ENCODE measurements at regions of chr6 and their contacts with region 1.

Region 1: DNA sequence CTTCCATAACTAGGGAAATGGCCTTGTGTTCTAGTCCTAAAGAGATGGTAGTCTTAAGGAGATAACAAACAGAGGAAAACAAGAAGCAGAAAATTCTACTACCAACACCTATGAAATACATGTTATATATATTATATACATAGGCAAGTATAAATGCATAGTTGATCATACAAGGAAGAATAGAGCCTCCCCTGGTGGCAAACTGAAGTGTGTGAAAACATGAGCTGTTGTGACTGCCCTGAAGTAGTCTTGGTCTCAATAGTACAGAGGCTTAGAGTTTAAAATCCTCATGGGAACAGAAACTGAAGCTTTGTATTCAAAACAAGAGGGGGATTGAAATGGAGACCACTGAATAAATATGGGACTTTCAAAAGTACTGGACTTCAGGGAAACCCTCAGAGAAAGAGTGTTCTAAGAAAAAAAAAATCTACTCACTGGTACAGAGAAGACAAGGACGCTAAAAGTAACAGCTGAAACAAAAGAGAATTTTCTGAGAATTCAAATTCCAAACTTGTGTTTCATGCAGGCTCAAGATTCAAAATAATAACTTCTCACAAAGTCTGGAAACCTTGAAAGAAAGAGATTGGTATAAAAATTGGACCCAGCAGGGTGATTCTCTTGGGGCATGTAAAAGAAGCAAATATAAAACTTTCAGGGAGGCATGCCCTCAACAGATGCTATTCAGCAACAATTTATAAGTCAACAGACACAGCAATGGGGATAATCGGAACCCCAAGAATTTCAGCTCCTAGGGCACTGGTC is 59.7 kb upstream of the SAMD3 start:
- DNase-seq: peak in 6 of 9 experiments; percentile 14 to 67 (median 32)
- ATAC-seq: peak; percentile 73
- H3K4me3 ChIP-seq: no peak overlapping the region
- H3K4me3 Mint-ChIP-seq: no peak overlapping the region
- H3K27ac ChIP-seq: no peak overlapping the region
- H3K27ac Mint-ChIP-seq: no peak overlapping the region
- H3K4me1 ChIP-seq: no peaks in the 10 kb centered on the region
- H3K4me1 Mint-ChIP-seq: peaks cover 10% of the 10 kb centered on the region
- H3K27me3 ChIP-seq: no peaks in the 10 kb centered on the region
- H3K27me3 Mint-ChIP-seq: no peaks in the 10 kb centered on the region
- CTCF ChIP-seq: peak; percentile 70

Region 2: DNA sequence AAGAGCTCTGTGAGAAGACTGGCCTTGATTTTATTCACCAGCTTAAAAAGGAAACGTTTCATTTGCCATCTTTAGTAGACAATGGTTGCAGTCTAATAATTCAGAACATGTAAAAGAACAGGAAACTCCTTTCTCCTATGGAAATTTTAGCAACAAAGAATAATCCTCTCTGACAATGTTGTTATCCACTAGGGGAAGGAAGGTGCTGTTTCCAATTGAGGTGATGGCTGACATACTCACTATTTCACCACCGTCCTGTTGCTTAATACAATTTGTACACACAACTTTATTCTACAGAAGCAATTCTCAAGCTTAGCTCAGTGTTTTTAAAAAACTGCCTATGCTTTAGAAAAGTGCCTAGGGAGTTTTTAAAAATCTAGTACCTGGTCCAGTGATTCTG is 765.1 kb before region 1 on chr6:
- CTCF ChIA-PET with region 1: no interaction called
- POLR2A ChIA-PET with region 1: no interaction called
- intact Hi-C with region 1: no loop called
- DNase-seq: no peak
- ATAC-seq: no peak
- H3K4me3 ChIP-seq: no peak overlapping the region
- H3K4me3 Mint-ChIP-seq: no peak overlapping the region
- H3K27ac ChIP-seq: no peak overlapping the region
- H3K27ac Mint-ChIP-seq: no peak overlapping the region
- H3K4me1 ChIP-seq: no peaks in the 10 kb centered on the region
- H3K4me1 Mint-ChIP-seq: no peaks in the 10 kb centered on the region
- H3K27me3 ChIP-seq: no peaks in the 10 kb centered on the region
- H3K27me3 Mint-ChIP-seq: no peaks in the 10 kb centered on the region
- CTCF ChIP-seq: no peak

Region 3: DNA sequence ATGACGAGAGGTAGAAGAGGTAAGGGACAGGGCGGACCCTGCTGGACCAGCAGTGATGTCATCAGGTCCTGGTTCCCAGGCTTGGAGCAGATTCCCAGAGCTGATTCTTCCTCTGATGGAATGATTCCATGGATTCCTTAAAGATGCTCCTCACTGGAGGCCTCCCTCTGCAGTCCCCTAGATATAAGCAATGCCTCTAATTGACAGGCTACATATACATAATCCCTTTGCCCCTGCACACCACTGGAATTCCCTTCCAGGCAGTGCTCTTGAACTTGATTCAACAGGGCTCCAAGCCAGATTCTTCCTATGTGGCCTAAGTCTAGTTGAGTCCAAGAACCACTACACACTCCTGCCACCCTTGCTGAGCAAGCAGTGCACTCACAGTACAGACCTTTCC is 316.3 kb before region 1 on chr6:
- CTCF ChIA-PET with region 1: no interaction called
- POLR2A ChIA-PET with region 1: no interaction called
- intact Hi-C with region 1: no loop called
- DNase-seq: no peak
- ATAC-seq: no peak
- H3K4me3 ChIP-seq: no peak overlapping the region
- H3K4me3 Mint-ChIP-seq: no peak overlapping the region
- H3K27ac ChIP-seq: no peak overlapping the region
- H3K27ac Mint-ChIP-seq: no peak overlapping the region
- H3K4me1 ChIP-seq: no peaks in the 10 kb centered on the region
- H3K4me1 Mint-ChIP-seq: no peaks in the 10 kb centered on the region
- H3K27me3 ChIP-seq: peaks cover 0 to 7% of the 10 kb centered on the region in 2 experiments
- H3K27me3 Mint-ChIP-seq: peaks cover 17% of the 10 kb centered on the region
- CTCF ChIP-seq: no peak

Region 4: GRCh38 chr6:130037207-130037811 is 245.1 kb before region 1 on chr6:
- CTCF ChIA-PET with region 1: interaction called, 5 read pairs
- POLR2A ChIA-PET with region 1: no interaction called
- intact Hi-C with region 1: loop called in 1 of 2 experiments (anchors 1 kb)
- DNase-seq: peak in 2 of 9 experiments; percentile 45 to 59
- ATAC-seq: peak; percentile 62
- H3K4me3 ChIP-seq: no peak overlapping the region
- H3K4me3 Mint-ChIP-seq: no peak overlapping the region
- H3K27ac ChIP-seq: no peak overlapping the region
- H3K27ac Mint-ChIP-seq: no peak overlapping the region
- H3K4me1 ChIP-seq: peaks cover 17% of the 10 kb centered on the region
- H3K4me1 Mint-ChIP-seq: peaks cover 66% of the 10 kb centered on the region
- H3K27me3 ChIP-seq: no peaks in the 10 kb centered on the region
- H3K27me3 Mint-ChIP-seq: no peaks in the 10 kb centered on the region
- CTCF ChIP-seq: peak; percentile 85

Region 5: DNA sequence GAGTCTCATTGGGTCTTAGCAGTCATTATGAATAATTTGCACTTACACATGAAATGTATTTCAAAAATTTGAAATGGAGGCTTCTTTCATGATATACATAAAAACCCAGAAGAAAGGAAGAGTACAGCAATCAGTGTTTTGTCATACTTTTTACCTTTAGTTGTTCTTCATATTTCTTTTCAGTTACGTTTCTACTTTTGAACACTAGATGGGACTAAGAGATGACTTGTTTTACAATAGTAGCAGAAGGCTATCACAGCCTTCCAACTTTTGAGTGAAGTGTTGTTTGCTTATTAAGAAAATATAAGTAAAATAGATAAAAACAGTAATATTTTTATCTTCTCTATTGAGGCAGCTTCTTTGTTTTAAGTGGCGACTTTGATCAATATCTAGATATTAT is 205.9 kb before region 1 on chr6:
- CTCF ChIA-PET with region 1: interaction called, 22 read pairs
- POLR2A ChIA-PET with region 1: no interaction called
- intact Hi-C with region 1: loop called (anchors 1 to 2 kb)
- DNase-seq: peak in 2 of 9 experiments; percentile 25 to 39
- ATAC-seq: no peak
- H3K4me3 ChIP-seq: no peak overlapping the region
- H3K4me3 Mint-ChIP-seq: no peak overlapping the region
- H3K27ac ChIP-seq: no peak overlapping the region
- H3K27ac Mint-ChIP-seq: no peak overlapping the region
- H3K4me1 ChIP-seq: no peaks in the 10 kb centered on the region
- H3K4me1 Mint-ChIP-seq: peaks cover 18% of the 10 kb centered on the region
- H3K27me3 ChIP-seq: no peaks in the 10 kb centered on the region
- H3K27me3 Mint-ChIP-seq: no peaks in the 10 kb centered on the region
- CTCF ChIP-seq: no peak

Region 6: GRCh38 chr6:130159956-130160355 is 122.5 kb before region 1 on chr6:
- CTCF ChIA-PET with region 1: interaction called, 3 read pairs
- POLR2A ChIA-PET with region 1: no interaction called
- intact Hi-C with region 1: loop called in 1 of 2 experiments (anchors 5 kb)
- DNase-seq: no peak
- ATAC-seq: no peak
- H3K4me3 ChIP-seq: no peak overlapping the region
- H3K4me3 Mint-ChIP-seq: no peak overlapping the region
- H3K27ac ChIP-seq: no peak overlapping the region
- H3K27ac Mint-ChIP-seq: peak overlapping the region; percentile 69
- H3K4me1 ChIP-seq: no peaks in the 10 kb centered on the region
- H3K4me1 Mint-ChIP-seq: peaks cover 28% of the 10 kb centered on the region
- H3K27me3 ChIP-seq: no peaks in the 10 kb centered on the region
- H3K27me3 Mint-ChIP-seq: no peaks in the 10 kb centered on the region
- CTCF ChIP-seq: no peak

Region 7: DNA sequence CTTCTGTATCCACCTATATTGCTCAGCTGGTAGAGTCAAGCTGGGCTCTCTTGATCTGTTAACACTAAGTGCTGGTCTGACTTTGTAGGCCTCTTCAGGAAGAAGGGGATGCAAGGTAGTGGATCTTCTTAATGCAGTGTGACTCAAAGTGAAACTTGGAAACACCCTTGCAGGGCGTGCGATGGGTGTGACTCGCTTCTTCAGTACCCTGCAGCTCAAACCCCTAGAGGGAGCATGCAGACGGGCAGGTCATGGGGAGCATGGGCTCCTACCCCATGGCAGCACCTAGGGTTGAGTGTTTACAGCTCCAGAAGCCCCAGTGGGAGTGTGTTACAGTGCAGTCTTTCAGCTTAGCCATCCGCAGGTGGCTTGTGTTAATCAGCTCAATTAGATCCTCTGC is 58.9 kb before region 1 on chr6:
- CTCF ChIA-PET with region 1: interaction called, 8 read pairs
- POLR2A ChIA-PET with region 1: no interaction called
- intact Hi-C with region 1: loop called in 1 of 2 experiments (anchors 5 kb)
- DNase-seq: peak; percentile 28 to 91 (median 66)
- ATAC-seq: peak; percentile 93
- H3K4me3 ChIP-seq: peak overlapping the region; percentile 4 to 53
- H3K4me3 Mint-ChIP-seq: peak overlapping the region; percentile 65
- H3K27ac ChIP-seq: peak overlapping the region; percentile 40 to 78
- H3K27ac Mint-ChIP-seq: peak overlapping the region; percentile 92
- H3K4me1 ChIP-seq: peaks cover 19% of the 10 kb centered on the region
- H3K4me1 Mint-ChIP-seq: peaks cover 40% of the 10 kb centered on the region
- H3K27me3 ChIP-seq: no peaks in the 10 kb centered on the region
- H3K27me3 Mint-ChIP-seq: no peaks in the 10 kb centered on the region
- CTCF ChIP-seq: peak; percentile 53

Measured in CD8-positive, alpha-beta T cell (primary cell).